ENCODE measurements at regions of chrX and their contacts with region 1.

Region 1: GRCh38 chrX:18410043-18410442 is 15.4 kb upstream of the CDKL5 start:
- DNase-seq: no peak
- ATAC-seq: no peak
- H3K4me3 ChIP-seq: no peak overlapping the region
- H3K27ac ChIP-seq: no peak overlapping the region
- H3K4me1 ChIP-seq: no peaks in the 10 kb centered on the region
- H3K27me3 ChIP-seq: no peaks in the 10 kb centered on the region
- CTCF ChIP-seq: peak; percentile 46

Region 2: GRCh38 chrX:18677140-18677869 is 267.3 kb after region 1 on chrX:
- CTCF ChIA-PET with region 1: no interaction called
- POLR2A ChIA-PET with region 1: interaction called, 10 read pairs
- in situ Hi-C with region 1: no loop called
- intact Hi-C with region 1: no loop called
- DNase-seq: no peak
- ATAC-seq: no peak
- H3K4me3 ChIP-seq: no peak overlapping the region
- H3K27ac ChIP-seq: no peak overlapping the region
- H3K4me1 ChIP-seq: no peaks in the 10 kb centered on the region
- H3K27me3 ChIP-seq: no peaks in the 10 kb centered on the region
- CTCF ChIP-seq: no peak

Measured in Panc1 (cell line).